Caco-2 (cell line): ENCODE measurements at regions of chr13 and their contacts with region 1.

Region 1: GRCh38 chr13:110561344-110562035 is at the start of gene RAB20:
- DNase-seq: peak; percentile 92 to 94
- H3K4me3 ChIP-seq: peak within 1 kb of the TSS; percentile 84
- H3K4me3 Mint-ChIP-seq: peak within 1 kb of the TSS; percentile 85
- H3K27ac Mint-ChIP-seq: peak within 1 kb of the TSS; percentile 75
- H3K4me1 ChIP-seq: peaks cover 32% of the 10 kb centered on the region
- H3K4me1 Mint-ChIP-seq: peaks cover 35% of the 10 kb centered on the region
- H3K27me3 ChIP-seq: no peaks in the 10 kb centered on the region
- H3K27me3 Mint-ChIP-seq: no peaks in the 10 kb centered on the region
- CTCF ChIP-seq: no peak
- total RNA-seq, gene RAB20: 37.9 and 40.1 TPM in 2 replicates

Region 2: GRCh38 chr13:110220471-110220870 is 341.0 kb before region 1 on chr13:
- CTCF ChIA-PET with region 1: no interaction called
- POLR2A ChIA-PET with region 1: no interaction called
- intact Hi-C with region 1: loop called (anchors 5 kb)
- DNase-seq: no peak
- H3K4me3 ChIP-seq: no peak overlapping the region
- H3K4me3 Mint-ChIP-seq: no peak overlapping the region
- H3K27ac Mint-ChIP-seq: peak overlapping the region; percentile 83
- H3K4me1 ChIP-seq: peaks cover 6% of the 10 kb centered on the region
- H3K4me1 Mint-ChIP-seq: peaks cover 8% of the 10 kb centered on the region
- H3K27me3 ChIP-seq: no peaks in the 10 kb centered on the region
- H3K27me3 Mint-ChIP-seq: no peaks in the 10 kb centered on the region
- CTCF ChIP-seq: no peak

Region 3: GRCh38 chr13:110371550-110372465 is 189.7 kb before region 1 on chr13:
- CTCF ChIA-PET with region 1: no interaction called
- POLR2A ChIA-PET with region 1: no interaction called
- intact Hi-C with region 1: no loop called
- DNase-seq: no peak
- H3K4me3 ChIP-seq: no peak overlapping the region
- H3K4me3 Mint-ChIP-seq: no peak overlapping the region
- H3K27ac Mint-ChIP-seq: no peak overlapping the region
- H3K4me1 ChIP-seq: 0 out of 2 replicates have a peak, but pooled peaks cover 4% of the 10 kb centered on the region
- H3K4me1 Mint-ChIP-seq: peaks cover 11% of the 10 kb centered on the region
- H3K27me3 ChIP-seq: no peaks in the 10 kb centered on the region
- H3K27me3 Mint-ChIP-seq: no peaks in the 10 kb centered on the region
- CTCF ChIP-seq: no peak

Region 4: DNA sequence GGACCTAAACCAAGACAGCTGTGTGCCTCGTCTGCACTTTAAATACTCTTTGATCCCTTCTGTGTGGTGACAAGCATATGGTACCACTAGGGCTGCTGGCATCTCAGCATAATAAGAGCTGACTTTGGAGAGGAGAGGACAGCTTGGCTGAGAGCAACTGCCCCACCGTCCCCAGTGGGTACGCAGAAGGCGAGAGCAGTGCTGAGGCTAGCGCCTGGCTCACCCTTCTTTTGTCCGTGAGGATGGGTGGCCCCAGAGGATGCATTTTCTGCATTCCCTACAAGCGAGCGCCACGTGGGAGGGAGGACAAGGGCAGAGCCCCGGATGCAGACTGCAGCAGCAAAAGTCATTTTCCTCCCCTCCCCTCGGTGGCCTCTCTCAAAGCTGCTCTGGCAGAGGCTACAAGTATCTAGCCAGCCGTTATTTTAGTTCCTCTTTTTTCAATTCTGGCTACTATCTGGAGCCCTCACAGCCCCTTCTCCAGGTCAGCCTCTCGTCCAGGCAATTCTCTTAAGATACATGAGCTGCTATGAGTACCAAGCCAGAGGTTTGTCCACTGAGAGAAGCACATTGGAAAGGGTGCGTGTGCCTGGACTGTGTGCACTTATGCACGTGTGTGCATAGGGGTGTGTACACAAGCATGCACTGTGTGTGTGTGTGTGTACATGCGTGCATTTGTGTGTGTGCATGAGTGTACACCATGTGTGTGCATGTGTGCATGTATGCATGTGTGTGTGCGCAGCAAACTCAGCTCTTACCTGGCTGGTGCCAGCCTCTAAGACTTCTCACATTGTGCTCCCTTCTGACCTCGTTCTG is 51.3 kb before region 1 on chr13:
- CTCF ChIA-PET with region 1: no interaction called
- POLR2A ChIA-PET with region 1: interaction called, 8 read pairs
- intact Hi-C with region 1: loop called (anchors 1 kb)
- DNase-seq: peak in 1 of 2 experiments; percentile 37
- H3K4me3 ChIP-seq: no peak overlapping the region
- H3K4me3 Mint-ChIP-seq: no peak overlapping the region
- H3K27ac Mint-ChIP-seq: peak overlapping the region; percentile 69
- H3K4me1 ChIP-seq: peaks cover 53% of the 10 kb centered on the region
- H3K4me1 Mint-ChIP-seq: peaks cover 43% of the 10 kb centered on the region
- H3K27me3 ChIP-seq: no peaks in the 10 kb centered on the region
- H3K27me3 Mint-ChIP-seq: no peaks in the 10 kb centered on the region
- CTCF ChIP-seq: no peak

Region 5: DNA sequence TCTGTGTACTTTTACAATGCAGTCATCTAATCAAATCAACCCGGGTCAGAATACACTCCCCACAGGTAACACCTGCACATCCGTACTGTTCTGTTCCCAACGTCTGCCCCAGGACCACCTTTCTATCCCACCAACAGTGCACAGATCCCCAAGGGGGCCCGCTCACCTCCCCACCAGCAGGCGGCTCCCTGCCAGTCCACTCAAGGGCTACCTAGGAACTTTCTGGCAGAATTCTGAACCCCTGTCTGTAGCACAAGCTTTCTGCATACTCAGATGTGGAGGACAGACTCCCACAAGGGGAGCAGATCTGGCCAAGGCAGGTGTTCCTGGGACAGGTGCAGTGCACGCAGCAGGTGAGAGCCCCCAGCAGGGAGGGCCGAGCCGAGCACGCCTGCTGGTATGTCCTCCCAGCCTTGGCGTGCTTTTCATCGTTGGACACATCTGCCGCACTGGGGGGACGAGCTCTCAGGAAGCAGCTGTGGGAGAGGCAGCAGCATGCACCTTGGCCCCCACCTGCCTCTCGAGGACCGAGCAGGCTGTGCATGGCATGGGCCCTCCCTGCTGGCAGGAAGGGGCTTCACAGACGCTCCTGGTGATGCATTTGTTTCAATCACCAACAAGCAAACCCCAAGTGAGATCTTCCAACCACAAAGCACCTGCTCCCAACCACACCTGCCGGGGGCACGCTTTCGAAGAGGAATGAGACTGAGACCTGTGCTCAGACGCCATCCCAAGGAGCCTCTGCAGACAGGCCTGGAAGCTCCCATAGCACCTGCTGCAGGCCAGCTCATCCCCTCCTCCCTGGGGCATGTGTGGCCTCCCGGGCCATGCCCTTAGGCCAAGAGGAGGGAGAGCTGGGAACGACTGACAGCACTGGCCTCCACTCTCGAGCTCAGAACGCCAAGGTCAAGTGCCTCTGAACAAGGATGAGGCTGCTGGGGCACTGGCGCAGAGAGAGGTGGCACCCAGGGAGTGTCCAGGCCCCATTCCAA is 35.9 kb before region 1 on chr13:
- CTCF ChIA-PET with region 1: no interaction called
- POLR2A ChIA-PET with region 1: interaction called, 5 read pairs
- intact Hi-C with region 1: loop called (anchors 5 kb)
- DNase-seq: no peak
- H3K4me3 ChIP-seq: no peak overlapping the region
- H3K4me3 Mint-ChIP-seq: no peak overlapping the region
- H3K27ac Mint-ChIP-seq: peak overlapping the region; percentile 84
- H3K4me1 ChIP-seq: peaks cover 41% of the 10 kb centered on the region
- H3K4me1 Mint-ChIP-seq: peaks cover 38% of the 10 kb centered on the region
- H3K27me3 ChIP-seq: no peaks in the 10 kb centered on the region
- H3K27me3 Mint-ChIP-seq: no peaks in the 10 kb centered on the region
- CTCF ChIP-seq: no peak

Region 6: DNA sequence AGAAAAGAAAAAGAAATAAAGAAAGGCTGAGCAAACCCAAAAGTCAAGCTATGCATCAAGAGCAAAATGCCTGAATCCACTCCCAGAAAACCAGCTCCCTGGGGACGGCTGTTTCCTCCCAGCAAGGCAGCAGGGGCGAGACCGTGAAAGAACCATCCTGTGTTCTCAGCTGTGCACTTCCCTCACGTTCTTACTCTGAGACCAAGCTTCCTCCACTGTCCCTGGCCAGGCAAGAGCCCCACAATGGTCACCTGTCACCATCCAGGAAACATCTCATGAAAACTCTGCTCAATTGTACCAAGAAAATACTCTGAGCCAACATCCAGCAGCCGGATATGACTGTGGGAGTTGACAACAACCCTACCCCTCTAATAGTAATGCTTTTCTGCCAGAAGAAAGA is 22.9 kb before region 1 on chr13:
- CTCF ChIA-PET with region 1: interaction called, 3 read pairs
- POLR2A ChIA-PET with region 1: interaction called, 17 read pairs
- intact Hi-C with region 1: loop called (anchors 2 kb)
- DNase-seq: no peak
- H3K4me3 ChIP-seq: no peak overlapping the region
- H3K4me3 Mint-ChIP-seq: no peak overlapping the region
- H3K27ac Mint-ChIP-seq: no peak overlapping the region
- H3K4me1 ChIP-seq: peaks cover 17% of the 10 kb centered on the region
- H3K4me1 Mint-ChIP-seq: peaks cover 28% of the 10 kb centered on the region
- H3K27me3 ChIP-seq: no peaks in the 10 kb centered on the region
- H3K27me3 Mint-ChIP-seq: no peaks in the 10 kb centered on the region
- CTCF ChIP-seq: no peak

Region 7: GRCh38 chr13:110575322-110576069 is 14.0 kb after region 1 on chr13:
- CTCF ChIA-PET with region 1: no interaction called
- POLR2A ChIA-PET with region 1: no interaction called
- intact Hi-C with region 1: no loop called
- DNase-seq: peak; percentile 47 to 59
- H3K4me3 ChIP-seq: no peak overlapping the region
- H3K4me3 Mint-ChIP-seq: no peak overlapping the region
- H3K27ac Mint-ChIP-seq: no peak overlapping the region
- H3K4me1 ChIP-seq: peaks cover 18% of the 10 kb centered on the region
- H3K4me1 Mint-ChIP-seq: peaks cover 21% of the 10 kb centered on the region
- H3K27me3 ChIP-seq: no peaks in the 10 kb centered on the region
- H3K27me3 Mint-ChIP-seq: no peaks in the 10 kb centered on the region
- CTCF ChIP-seq: peak in 1 of 2 experiments; percentile 37

Region 8: DNA sequence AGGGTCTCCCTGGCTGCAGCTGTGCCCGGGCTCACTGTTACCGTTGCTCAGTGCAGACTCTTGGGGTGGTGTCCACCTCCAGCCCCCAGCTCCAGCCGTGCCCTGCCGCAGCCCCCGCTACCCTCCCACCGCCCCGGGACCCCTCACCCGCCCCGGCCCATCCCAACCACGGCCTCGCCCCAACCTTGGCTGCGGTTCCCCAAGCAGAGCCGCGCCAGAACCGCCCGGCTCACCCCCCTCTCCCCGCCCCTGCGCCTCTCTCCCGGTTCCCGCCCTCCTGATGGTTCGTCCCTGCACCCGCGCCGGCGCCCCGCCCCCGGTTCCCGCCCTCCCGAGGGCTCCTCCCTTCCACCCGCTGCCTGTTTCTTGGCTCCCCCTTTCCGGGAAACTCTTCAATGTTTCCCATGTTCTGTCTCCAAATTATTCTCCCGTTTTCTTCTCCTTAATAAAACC is 313.0 kb after region 1 on chr13:
- CTCF ChIA-PET with region 1: no interaction called
- POLR2A ChIA-PET with region 1: no interaction called
- intact Hi-C with region 1: no loop called
- DNase-seq: peak; percentile 81 to 84
- H3K4me3 ChIP-seq: peak overlapping the region; percentile 35
- H3K4me3 Mint-ChIP-seq: no peak overlapping the region
- H3K27ac Mint-ChIP-seq: peak overlapping the region; percentile 55
- H3K4me1 ChIP-seq: peaks cover 22% of the 10 kb centered on the region; the same call in 1 of the 2 replicates
- H3K4me1 Mint-ChIP-seq: peaks cover 5% of the 10 kb centered on the region
- H3K27me3 ChIP-seq: no peaks in the 10 kb centered on the region
- H3K27me3 Mint-ChIP-seq: no peaks in the 10 kb centered on the region
- CTCF ChIP-seq: no peak

Region 9: GRCh38 chr13:110915057-110915873 is 353.8 kb after region 1 on chr13 and contains the start of gene ANKRD10:
- CTCF ChIA-PET with region 1: no interaction called
- POLR2A ChIA-PET with region 1: no interaction called
- intact Hi-C with region 1: no loop called
- DNase-seq: peak; percentile 100
- H3K4me3 ChIP-seq: peak within 1 kb of the TSS; percentile 95
- H3K4me3 Mint-ChIP-seq: peak within 1 kb of the TSS; percentile 71
- H3K27ac Mint-ChIP-seq: peak within 1 kb of the TSS; percentile 79
- H3K4me1 ChIP-seq: peaks cover 23% of the 10 kb centered on the region; the same call in 1 of the 2 replicates
- H3K4me1 Mint-ChIP-seq: peaks cover 7% of the 10 kb centered on the region
- H3K27me3 ChIP-seq: no peaks in the 10 kb centered on the region
- H3K27me3 Mint-ChIP-seq: no peaks in the 10 kb centered on the region
- CTCF ChIP-seq: peak; percentile 78 to 80
- total RNA-seq, gene ANKRD10: 123 and 132 TPM in 2 replicates